Breast epithelium (tissue), 4 donors: ENCODE measurements at regions of chr2 and their contacts with region 1.

Region 1: GRCh38 chr2:217538719-217539118 is 464.1 kb downstream of the TNS1 start:
- DNase-seq: no peak
- H3K4me3 ChIP-seq: no peak overlapping the region
- H3K27ac ChIP-seq: no peak overlapping the region
- H3K4me1 ChIP-seq: no peaks in the 10 kb centered on the region
- H3K27me3 ChIP-seq: no peaks in the 10 kb centered on the region
- CTCF ChIP-seq: no peak
- POLR2A ChIP-seq: no peak

Region 2: GRCh38 chr2:217585362-217585761 is 46.6 kb after region 1 on chr2:
- intact Hi-C with region 1: no loop called
- DNase-seq: no peak
- H3K4me3 ChIP-seq: no peak overlapping the region
- H3K27ac ChIP-seq: no peak overlapping the region
- H3K4me1 ChIP-seq: no peaks in the 10 kb centered on the region
- H3K27me3 ChIP-seq: no peaks in the 10 kb centered on the region
- CTCF ChIP-seq: no peak
- POLR2A ChIP-seq: no peak

Region 3: DNA sequence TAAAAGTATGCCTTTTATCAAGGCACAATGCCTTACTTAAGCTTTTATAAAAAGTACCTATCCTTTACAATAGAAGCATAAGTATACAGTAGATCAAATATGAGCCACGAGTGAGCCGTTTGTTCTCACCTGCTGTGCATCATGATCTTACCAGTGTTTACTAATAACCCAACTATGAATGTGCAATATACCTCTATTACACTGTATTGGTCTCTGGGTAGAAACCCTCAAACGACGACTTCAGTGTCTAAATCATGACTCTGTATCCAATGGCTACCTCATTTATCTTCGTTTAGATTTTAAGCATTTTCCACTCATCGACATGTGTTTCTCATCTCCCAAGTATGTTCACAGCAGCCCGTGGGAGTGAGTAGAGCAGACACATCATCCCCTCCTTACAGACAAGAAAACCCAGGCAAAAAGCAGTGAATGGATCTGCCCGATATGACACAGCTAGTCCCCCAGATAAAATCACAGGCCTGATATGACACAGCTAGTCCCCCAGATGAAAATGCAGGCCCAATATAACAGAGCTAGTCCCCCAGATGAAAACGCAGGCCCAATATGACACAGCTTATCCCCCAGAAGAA is 184.3 kb after region 1 on chr2:
- intact Hi-C with region 1: loop called (anchors 5 kb)
- DNase-seq: no peak
- H3K4me3 ChIP-seq: no peak overlapping the region
- H3K27ac ChIP-seq: no peak overlapping the region
- H3K4me1 ChIP-seq: no peaks in the 10 kb centered on the region
- H3K27me3 ChIP-seq: no peaks in the 10 kb centered on the region
- CTCF ChIP-seq: no peak
- POLR2A ChIP-seq: no peak

Region 4: GRCh38 chr2:217743966-217744761 is 205.4 kb after region 1 on chr2:
- intact Hi-C with region 1: no loop called
- DNase-seq: no peak
- H3K4me3 ChIP-seq: no peak overlapping the region
- H3K27ac ChIP-seq: no peak overlapping the region
- H3K4me1 ChIP-seq: no peaks in the 10 kb centered on the region
- H3K27me3 ChIP-seq: no peaks in the 10 kb centered on the region
- CTCF ChIP-seq: no peak
- POLR2A ChIP-seq: no peak